Calu3 (cell line): ENCODE measurements at regions of chr4 and their contacts with region 1.

Region 1: DNA sequence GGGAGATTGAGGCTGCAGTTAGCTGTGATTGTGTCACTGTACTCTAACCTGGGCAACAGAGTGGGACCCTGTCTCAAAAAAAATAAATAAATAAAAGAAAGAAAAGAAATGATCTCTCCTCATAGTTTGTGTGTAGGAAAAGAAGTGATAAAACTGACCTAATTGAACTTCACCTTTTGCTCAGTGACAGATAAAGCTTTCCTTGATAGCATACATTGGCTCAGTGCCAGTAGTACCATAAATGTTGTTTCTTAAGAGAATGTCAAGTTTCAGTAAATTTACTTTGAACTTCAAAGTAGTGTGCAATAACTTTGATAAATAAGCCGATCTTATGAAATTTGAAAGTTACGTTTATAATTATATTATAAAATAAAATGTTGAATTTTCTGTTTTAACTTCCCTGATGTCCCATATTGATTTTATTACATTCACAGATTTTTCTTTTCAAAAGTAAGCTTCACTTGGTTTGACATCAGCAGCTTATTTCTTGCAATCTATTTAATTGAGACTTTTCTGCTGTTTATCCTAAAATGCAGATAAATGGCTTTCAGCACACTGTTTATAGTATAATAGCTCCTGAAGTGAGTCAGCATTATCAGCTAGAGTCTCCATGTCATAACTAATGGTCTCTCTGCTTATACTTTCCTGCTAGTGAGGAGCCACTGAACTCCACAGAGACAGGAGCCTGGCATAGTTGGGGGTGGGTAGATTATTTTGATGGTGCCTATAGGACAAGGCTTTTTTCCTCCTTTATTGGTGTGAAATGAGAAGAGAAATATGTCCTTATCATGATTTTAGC is 330.1 kb downstream of the BMPR1B start:
- DNase-seq: no peak
- H3K4me3 Mint-ChIP-seq: no peak overlapping the region
- H3K27ac Mint-ChIP-seq: peak overlapping the region; percentile 68
- H3K4me1 Mint-ChIP-seq: peaks cover 46% of the 10 kb centered on the region
- H3K27me3 Mint-ChIP-seq: no peaks in the 10 kb centered on the region
- CTCF ChIP-seq: no peak

Region 2: DNA sequence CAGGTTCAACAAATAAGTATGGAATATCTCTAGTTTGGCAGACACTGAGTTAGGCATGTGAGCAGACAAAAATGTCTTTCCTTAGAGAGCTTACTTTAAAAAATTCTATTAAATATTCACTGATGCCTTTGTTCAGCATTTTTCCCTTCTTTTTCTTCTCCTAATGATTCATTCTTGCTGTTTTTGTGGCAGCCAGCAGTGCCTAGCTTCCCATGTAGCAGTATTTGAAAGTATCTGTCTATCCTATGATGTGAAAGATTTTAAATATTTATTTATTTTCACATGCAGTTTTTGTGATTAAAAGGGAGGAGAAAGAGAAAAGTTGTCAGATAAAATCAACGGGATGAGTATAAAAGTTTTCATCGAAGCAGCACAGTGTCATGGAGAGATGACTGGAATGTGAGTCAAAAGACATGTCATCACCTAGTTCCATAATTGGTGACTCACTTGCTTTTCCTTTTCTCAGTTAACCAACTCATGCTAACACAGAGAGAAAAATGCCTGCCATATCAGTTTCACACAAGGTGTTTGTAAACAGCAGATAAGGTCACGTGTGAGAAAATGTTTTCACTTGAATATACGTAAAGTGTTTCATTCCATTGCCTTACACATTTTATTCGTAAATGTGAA is 260.3 kb before region 1 on chr4:
- CTCF ChIA-PET with region 1: no interaction called
- intact Hi-C with region 1: loop called (anchors 5 kb)
- DNase-seq: peak; percentile 4
- H3K4me3 Mint-ChIP-seq: no peak overlapping the region
- H3K27ac Mint-ChIP-seq: peak overlapping the region; percentile 10
- H3K4me1 Mint-ChIP-seq: peaks cover 13% of the 10 kb centered on the region
- H3K27me3 Mint-ChIP-seq: no peaks in the 10 kb centered on the region
- CTCF ChIP-seq: no peak